CD4-positive, alpha-beta T cell (primary cell): ENCODE measurements at regions of chr7 and their contacts with region 1.

Region 1: GRCh38 chr7:23546897-23547572 is 15.3 kb upstream of the TRA2A start:
- DNase-seq: peak; percentile 56 to 92 (median 69)
- ATAC-seq: peak; percentile 95
- H3K4me3 ChIP-seq: no peak overlapping the region
- H3K4me3 Mint-ChIP-seq: no peak overlapping the region
- H3K27ac ChIP-seq: no peak overlapping the region
- H3K27ac Mint-ChIP-seq: no peak overlapping the region
- H3K4me1 ChIP-seq: peaks cover 6% of the 10 kb centered on the region
- H3K4me1 Mint-ChIP-seq: peaks cover 13% of the 10 kb centered on the region
- H3K27me3 ChIP-seq: no peaks in the 10 kb centered on the region
- H3K27me3 Mint-ChIP-seq: no peaks in the 10 kb centered on the region
- CTCF ChIP-seq: peak; percentile 92

Region 2: DNA sequence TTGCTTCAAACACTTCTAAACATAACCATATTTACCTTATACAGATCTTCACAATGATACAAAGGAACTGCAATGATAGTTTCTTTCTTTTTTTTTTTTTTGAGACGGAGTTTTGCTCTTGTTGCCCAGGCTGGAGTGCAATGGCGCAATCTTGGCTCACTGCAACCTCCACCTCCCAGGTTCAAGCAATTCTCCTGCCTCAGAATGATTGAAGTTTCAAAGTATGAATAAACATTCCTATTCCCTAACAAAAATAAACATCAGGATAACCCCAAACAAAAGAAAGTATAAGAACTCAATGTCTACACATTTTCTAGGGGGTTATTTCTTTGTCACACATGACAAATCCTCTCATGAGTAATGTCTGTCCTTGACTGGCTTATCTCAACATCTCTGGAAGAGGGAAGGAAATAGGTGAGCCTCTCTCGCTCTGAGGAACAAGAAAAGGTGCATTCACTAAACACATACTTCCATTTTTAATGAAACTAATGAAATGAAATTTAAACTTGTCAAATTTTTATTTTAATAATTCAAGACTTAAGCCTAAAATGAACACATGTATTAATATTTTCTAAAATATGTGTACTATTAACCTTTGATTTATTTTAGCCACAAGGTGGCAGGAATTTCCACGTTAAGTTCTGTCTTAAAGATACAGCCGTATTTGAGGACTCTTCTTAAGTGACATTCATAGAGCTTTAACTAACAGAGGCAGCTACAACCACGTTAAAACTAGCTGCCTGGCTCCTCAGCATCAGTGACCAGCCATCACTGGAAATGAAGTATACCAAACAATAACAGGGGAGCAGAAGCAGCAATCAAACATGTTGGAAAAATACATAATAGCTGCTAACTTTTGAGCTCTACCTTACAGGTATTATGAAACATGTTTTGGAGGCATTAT is 189.6 kb before region 1 on chr7:
- CTCF ChIA-PET with region 1: no interaction called
- POLR2A ChIA-PET with region 1: interaction called, 4 read pairs
- intact Hi-C with region 1: loop called in 1 of 2 experiments (anchors 2 kb)
- DNase-seq: peak in 3 of 14 experiments; percentile 25 to 41 (median 39)
- ATAC-seq: peak; percentile 43
- H3K4me3 ChIP-seq: no peak overlapping the region
- H3K4me3 Mint-ChIP-seq: no peak overlapping the region
- H3K27ac ChIP-seq: no peak overlapping the region
- H3K27ac Mint-ChIP-seq: no peak overlapping the region
- H3K4me1 ChIP-seq: no peaks in the 10 kb centered on the region
- H3K4me1 Mint-ChIP-seq: peaks cover 15% of the 10 kb centered on the region
- H3K27me3 ChIP-seq: no peaks in the 10 kb centered on the region
- H3K27me3 Mint-ChIP-seq: peaks cover 12% of the 10 kb centered on the region
- CTCF ChIP-seq: peak; percentile 33

Region 3: DNA sequence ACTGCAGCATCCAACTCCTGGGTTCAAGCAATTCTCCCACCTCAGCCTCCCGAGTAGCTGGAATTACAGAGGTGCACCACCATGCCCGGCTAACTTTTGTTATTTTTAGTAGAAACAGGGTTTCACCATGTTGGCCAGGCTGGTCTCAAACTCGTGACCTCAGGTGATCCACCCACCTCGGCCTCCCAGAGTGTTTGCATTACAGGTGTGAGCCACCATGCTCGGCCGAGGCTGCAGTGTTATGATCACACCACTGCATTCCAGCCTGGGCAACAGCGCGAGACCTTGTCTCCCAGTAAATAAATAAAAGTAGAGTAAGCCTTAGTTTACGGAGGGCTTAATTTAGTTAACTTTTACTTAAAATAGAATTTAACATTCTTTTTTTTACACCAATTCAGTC is 53.0 kb before region 1 on chr7:
- CTCF ChIA-PET with region 1: no interaction called
- POLR2A ChIA-PET with region 1: no interaction called
- intact Hi-C with region 1: no loop called
- DNase-seq: no peak
- ATAC-seq: no peak
- H3K4me3 ChIP-seq: no peak overlapping the region
- H3K4me3 Mint-ChIP-seq: no peak overlapping the region
- H3K27ac ChIP-seq: no peak overlapping the region
- H3K27ac Mint-ChIP-seq: no peak overlapping the region
- H3K4me1 ChIP-seq: peaks cover 14% of the 10 kb centered on the region
- H3K4me1 Mint-ChIP-seq: peaks cover 9% of the 10 kb centered on the region
- H3K27me3 ChIP-seq: no peaks in the 10 kb centered on the region
- H3K27me3 Mint-ChIP-seq: no peaks in the 10 kb centered on the region
- CTCF ChIP-seq: no peak

Region 4: DNA sequence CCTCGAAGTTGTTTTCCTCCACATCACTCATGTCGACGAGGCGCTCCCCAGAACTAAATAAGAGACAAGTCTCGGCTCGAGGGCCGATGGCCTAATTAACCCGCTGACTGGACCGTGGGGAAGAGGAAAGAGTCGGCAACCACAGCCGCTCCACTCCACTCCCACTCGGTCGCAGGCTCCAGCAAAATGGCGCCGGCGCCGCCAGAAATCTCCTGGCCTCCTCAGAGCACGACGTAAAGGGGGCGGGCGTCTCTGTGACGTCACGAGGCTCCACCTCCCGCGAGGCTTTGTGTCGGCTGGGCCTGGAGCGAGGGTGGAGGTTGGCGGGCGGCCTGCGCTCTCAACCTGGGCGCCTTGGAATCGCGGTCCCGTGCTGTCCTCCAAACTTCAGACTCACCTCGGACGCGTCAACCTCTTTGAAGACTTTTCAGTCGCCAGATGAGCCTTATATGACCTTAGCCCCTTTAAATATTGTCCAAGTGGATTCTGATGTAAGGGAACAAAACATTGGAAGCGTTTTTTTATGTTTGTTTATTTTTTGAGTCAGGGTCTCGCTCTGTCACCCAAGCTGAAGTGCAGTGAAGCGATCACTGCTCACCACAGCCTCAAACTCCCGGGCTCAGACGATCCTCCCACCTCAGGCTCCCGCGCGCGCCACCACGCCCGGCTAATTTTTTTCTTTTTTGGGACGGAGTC is 15.1 kb before region 1 on chr7 and contains the start of gene TRA2A:
- CTCF ChIA-PET with region 1: interaction called, 13 read pairs
- POLR2A ChIA-PET with region 1: interaction called, 10 read pairs
- intact Hi-C with region 1: loop called in 1 of 2 experiments (anchors 2 kb)
- DNase-seq: peak; percentile 92 to 99 (median 97)
- ATAC-seq: peak; percentile 91
- H3K4me3 ChIP-seq: peak within 1 kb of the TSS; percentile 97
- H3K4me3 Mint-ChIP-seq: peak within 1 kb of the TSS; percentile 94
- H3K27ac ChIP-seq: peak within 1 kb of the TSS; percentile 95 to 98
- H3K27ac Mint-ChIP-seq: peak within 1 kb of the TSS; percentile 97
- H3K4me1 ChIP-seq: peaks cover 29% of the 10 kb centered on the region
- H3K4me1 Mint-ChIP-seq: peaks cover 49% of the 10 kb centered on the region
- H3K27me3 ChIP-seq: no peaks in the 10 kb centered on the region
- H3K27me3 Mint-ChIP-seq: no peaks in the 10 kb centered on the region
- CTCF ChIP-seq: no peak
- total RNA-seq, gene TRA2A: 246 to 275 TPM

Region 5: DNA sequence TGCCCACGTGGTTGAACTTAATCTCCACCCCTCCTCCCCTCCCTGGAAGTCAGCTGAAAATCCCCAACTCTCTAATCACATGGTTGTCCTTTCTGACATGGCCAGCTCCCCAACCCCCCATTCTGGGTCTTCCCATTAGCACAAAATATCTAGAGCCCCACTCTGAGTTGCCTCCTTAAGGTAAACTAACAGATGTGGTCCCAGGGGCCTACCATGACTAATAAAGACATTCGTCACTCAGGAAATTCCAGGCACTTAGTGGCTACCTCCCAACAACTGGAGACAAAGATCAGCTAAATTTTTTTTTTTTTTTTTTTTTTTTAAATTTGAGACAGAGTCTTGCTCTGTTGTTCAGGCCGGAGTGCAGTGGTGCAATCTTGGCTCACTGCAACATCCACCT is 71.2 kb after region 1 on chr7:
- CTCF ChIA-PET with region 1: no interaction called
- POLR2A ChIA-PET with region 1: no interaction called
- intact Hi-C with region 1: no loop called
- DNase-seq: no peak
- ATAC-seq: no peak
- H3K4me3 ChIP-seq: no peak overlapping the region
- H3K4me3 Mint-ChIP-seq: no peak overlapping the region
- H3K27ac ChIP-seq: no peak overlapping the region
- H3K27ac Mint-ChIP-seq: no peak overlapping the region
- H3K4me1 ChIP-seq: no peaks in the 10 kb centered on the region
- H3K4me1 Mint-ChIP-seq: peaks cover 9% of the 10 kb centered on the region
- H3K27me3 ChIP-seq: no peaks in the 10 kb centered on the region
- H3K27me3 Mint-ChIP-seq: no peaks in the 10 kb centered on the region
- CTCF ChIP-seq: no peak

Region 6: DNA sequence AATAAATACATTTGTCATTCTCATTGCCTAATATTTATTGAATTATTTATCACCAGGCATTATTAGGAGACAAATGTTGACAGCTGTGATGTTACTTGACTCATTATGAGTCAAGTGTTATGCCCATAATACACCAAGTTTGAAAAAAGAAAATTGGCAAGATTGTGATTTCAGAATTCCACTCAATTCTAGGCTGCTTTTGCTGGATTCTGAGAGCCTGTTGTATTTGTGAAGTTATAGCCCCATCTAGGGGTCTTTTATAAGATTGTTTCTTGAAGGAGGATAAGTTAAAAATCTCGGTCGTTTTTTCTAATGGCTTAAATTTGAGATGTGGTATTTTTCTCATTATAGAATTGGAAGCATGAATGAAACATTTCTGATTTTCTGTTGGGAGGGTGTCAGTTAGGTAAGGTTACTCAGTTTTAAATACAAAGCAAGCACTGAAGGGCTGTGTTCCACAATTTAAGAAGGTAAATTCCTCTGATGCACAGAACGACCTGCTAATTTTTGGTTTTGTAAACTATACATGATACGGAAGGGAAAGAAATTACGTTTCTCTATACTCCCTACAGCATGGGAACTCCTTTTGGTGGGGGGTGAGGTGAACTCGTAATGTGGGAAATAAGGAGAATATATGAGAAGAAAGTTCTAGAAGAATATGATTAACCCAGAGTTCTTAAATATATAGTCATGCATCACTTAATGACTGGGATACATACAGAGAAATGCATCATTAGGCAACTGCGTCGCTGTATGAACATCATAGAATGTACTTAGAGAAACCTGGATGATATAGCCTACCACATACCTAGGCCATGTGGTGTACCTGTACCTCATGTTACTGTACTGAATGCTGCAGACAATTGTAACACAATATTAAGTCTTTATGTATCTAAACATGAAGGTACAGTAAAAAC is 165.6 kb after region 1 on chr7:
- CTCF ChIA-PET with region 1: interaction called, 7 read pairs
- POLR2A ChIA-PET with region 1: no interaction called
- intact Hi-C with region 1: loop called (anchors 1 kb)
- DNase-seq: peak in 3 of 14 experiments; percentile 58 to 69 (median 67)
- ATAC-seq: no peak
- H3K4me3 ChIP-seq: no peak overlapping the region
- H3K4me3 Mint-ChIP-seq: no peak overlapping the region
- H3K27ac ChIP-seq: no peak overlapping the region
- H3K27ac Mint-ChIP-seq: no peak overlapping the region
- H3K4me1 ChIP-seq: no peaks in the 10 kb centered on the region
- H3K4me1 Mint-ChIP-seq: no peaks in the 10 kb centered on the region
- H3K27me3 ChIP-seq: no peaks in the 10 kb centered on the region
- H3K27me3 Mint-ChIP-seq: no peaks in the 10 kb centered on the region
- CTCF ChIP-seq: peak; percentile 93

Region 7: GRCh38 chr7:24024276-24025068 is 477.4 kb after region 1 on chr7:
- CTCF ChIA-PET with region 1: no interaction called
- POLR2A ChIA-PET with region 1: no interaction called
- intact Hi-C with region 1: no loop called
- DNase-seq: no peak
- ATAC-seq: no peak
- H3K4me3 ChIP-seq: no peak overlapping the region
- H3K4me3 Mint-ChIP-seq: no peak overlapping the region
- H3K27ac ChIP-seq: no peak overlapping the region
- H3K27ac Mint-ChIP-seq: no peak overlapping the region
- H3K4me1 ChIP-seq: no peaks in the 10 kb centered on the region
- H3K4me1 Mint-ChIP-seq: no peaks in the 10 kb centered on the region
- H3K27me3 ChIP-seq: peaks cover 0 to 2% of the 10 kb centered on the region in 2 experiments
- H3K27me3 Mint-ChIP-seq: no peaks in the 10 kb centered on the region
- CTCF ChIP-seq: no peak

Region 8: DNA sequence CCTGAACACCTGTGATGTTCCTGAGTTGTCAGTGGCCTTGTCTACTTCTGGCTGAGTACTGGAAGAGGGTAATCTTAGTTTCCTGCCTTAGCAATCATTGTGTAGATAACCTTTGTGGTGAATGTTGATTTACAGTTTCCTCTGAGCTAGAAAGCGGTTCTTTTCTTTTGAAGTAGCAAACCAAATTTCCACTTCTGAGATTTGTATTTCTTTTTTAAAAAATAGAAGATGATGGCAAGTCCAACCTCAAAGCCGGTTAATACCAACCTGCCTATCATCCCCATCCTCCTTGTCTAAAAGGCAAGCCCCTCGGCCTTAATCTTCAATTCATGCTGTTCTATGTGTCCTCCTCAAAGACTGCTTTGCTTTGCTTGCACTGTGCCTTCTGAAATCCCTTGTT is 1013.7 kb after region 1 on chr7:
- CTCF ChIA-PET with region 1: no interaction called
- POLR2A ChIA-PET with region 1: no interaction called
- intact Hi-C with region 1: no loop called
- DNase-seq: peak in 4 of 14 experiments; percentile 17 to 50 (median 19)
- ATAC-seq: peak; percentile 89
- H3K4me3 ChIP-seq: no peak overlapping the region
- H3K4me3 Mint-ChIP-seq: peak overlapping the region; percentile 16
- H3K27ac ChIP-seq: no peak overlapping the region
- H3K27ac Mint-ChIP-seq: peak overlapping the region; percentile 16
- H3K4me1 ChIP-seq: peaks cover 10% of the 10 kb centered on the region
- H3K4me1 Mint-ChIP-seq: peaks cover 20% of the 10 kb centered on the region
- H3K27me3 ChIP-seq: no peaks in the 10 kb centered on the region
- H3K27me3 Mint-ChIP-seq: no peaks in the 10 kb centered on the region
- CTCF ChIP-seq: no peak

Region 9: DNA sequence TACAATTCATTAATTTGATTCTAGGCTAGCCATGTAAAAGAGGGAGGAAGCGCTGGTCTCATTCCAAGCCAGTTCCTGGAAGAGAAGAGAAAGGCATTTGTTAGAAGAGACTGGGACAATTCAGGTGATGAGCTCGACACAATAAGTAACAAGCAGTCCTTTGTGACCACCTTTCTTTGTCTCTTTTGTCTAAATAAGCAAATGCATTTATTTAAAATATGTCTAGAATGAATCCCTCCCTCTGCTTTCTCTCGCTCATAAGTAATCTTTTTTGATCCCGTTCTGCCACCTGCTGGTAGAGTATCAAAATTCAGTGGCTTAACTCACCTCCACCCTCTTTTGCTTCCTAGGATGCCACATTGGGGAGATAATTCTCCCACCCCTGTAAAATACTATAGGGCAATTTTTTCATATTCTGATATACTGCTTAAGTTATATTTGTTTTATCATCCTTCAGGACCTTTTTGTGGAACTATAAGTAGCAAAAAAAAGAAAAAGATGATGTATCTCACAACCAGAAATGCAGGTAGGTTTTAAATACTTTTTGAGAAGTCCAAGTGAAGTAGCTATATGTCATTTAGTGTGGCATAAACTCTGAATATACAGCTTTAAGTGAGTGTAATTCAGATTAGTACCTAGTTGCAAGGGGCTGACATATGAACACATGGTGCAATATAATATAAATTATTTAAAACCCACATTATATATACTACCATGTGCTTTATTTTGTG is 1118.7 kb after region 1 on chr7:
- CTCF ChIA-PET with region 1: interaction called, 5 read pairs
- POLR2A ChIA-PET with region 1: no interaction called
- intact Hi-C with region 1: loop called in 1 of 2 experiments (anchors 5 kb)
- DNase-seq: peak in 12 of 14 experiments; percentile 3 to 69 (median 18)
- ATAC-seq: peak; percentile 39
- H3K4me3 ChIP-seq: no peak overlapping the region
- H3K4me3 Mint-ChIP-seq: no peak overlapping the region
- H3K27ac ChIP-seq: no peak overlapping the region
- H3K27ac Mint-ChIP-seq: no peak overlapping the region
- H3K4me1 ChIP-seq: no peaks in the 10 kb centered on the region
- H3K4me1 Mint-ChIP-seq: no peaks in the 10 kb centered on the region
- H3K27me3 ChIP-seq: no peaks in the 10 kb centered on the region
- H3K27me3 Mint-ChIP-seq: no peaks in the 10 kb centered on the region
- CTCF ChIP-seq: peak; percentile 86